GM10248 (cell line): ENCODE measurements at regions of chr11 and their contacts with region 1.

Region 1: GRCh38 chr11:6443269-6444003 is 2.6 kb upstream of the HPX start:
- DNase-seq: peak; percentile 75
- CTCF ChIP-seq: peak; percentile 88

Region 2: GRCh38 chr11:6362873-6363678 is 80.4 kb before region 1 on chr11:
- CTCF ChIA-PET with region 1: interaction called, 19 read pairs
- POLR2A ChIA-PET with region 1: no interaction called
- DNase-seq: peak; percentile 78
- CTCF ChIP-seq: peak; percentile 86

Region 3: GRCh38 chr11:6402561-6402981 is 40.9 kb before region 1 on chr11:
- CTCF ChIA-PET with region 1: interaction called, 63 read pairs
- POLR2A ChIA-PET with region 1: no interaction called
- DNase-seq: peak; percentile 77
- CTCF ChIP-seq: no peak

Region 4: DNA sequence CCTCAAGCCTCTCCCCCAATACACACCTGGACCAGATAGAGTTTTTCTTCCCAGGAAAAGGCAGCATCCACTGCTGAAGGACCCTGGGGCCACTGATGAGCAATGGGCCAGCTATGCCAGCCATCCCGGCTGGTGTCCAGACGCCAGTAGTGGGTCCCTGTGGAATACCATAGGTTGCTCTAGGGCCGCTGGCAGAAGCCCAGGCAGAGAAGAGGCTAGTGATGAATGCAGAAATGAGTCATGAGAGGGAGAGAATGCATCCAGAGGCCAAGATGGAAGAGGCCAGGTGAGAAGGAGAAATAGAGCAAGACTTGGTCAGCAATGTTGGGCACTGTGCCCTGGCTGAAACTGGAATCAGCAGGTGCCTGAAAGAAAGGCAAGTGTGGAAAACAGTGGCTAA is 11.6 kb before region 1 on chr11:
- CTCF ChIA-PET with region 1: interaction called, 136 read pairs
- POLR2A ChIA-PET with region 1: no interaction called
- DNase-seq: no peak
- CTCF ChIP-seq: no peak

Region 5: DNA sequence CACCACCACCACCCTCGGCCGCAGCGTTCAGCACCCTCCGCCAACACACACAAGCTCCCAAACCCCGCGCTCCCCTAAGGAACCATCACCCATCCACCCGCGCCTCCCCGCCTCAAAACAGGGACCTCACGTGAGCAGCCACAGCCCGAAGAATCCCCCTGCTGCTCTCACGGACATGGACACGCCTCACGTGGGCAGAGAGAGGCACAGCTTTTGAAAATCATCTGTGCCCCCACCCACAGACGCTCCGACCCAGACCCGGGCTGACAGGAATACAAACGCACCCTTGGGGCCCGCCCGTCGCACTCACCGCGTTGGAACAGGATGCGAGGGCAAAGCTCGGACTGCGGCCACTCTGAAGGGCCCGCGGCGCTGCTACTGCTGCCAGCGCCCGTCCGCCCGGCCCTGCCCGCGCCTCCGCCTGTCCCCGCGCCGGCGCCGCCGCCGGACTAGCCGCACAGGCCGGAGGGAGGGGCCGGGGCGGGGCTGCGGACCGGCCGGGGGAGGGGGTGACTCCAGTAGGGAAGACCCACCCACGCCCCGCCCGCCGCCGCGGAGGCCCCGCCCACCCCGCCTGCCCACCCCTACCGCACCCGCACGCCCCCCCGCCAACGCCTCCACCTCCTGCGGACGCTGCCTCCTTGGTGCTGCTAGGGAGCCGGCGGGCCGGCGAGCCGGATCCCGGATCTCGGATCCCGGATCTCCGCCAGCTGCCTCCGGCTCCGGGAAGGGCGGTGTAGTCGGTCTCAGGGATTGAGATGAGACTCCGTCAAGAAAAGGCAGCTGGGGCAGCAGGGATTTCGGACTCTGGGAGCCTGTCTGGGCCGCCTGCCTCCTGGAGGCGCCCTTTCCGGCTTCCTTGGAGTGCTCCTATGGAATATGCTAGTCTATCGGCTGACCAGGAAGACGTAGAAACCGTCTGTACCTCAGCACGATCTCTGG is 30.3 kb after region 1 on chr11 and contains the start of gene TRIM3:
- CTCF ChIA-PET with region 1: interaction called, 25 read pairs
- POLR2A ChIA-PET with region 1: no interaction called
- DNase-seq: peak; percentile 94
- CTCF ChIP-seq: no peak